Caco-2 (cell line): ENCODE measurements at regions of chr15 and their contacts with region 1.

Region 1: DNA sequence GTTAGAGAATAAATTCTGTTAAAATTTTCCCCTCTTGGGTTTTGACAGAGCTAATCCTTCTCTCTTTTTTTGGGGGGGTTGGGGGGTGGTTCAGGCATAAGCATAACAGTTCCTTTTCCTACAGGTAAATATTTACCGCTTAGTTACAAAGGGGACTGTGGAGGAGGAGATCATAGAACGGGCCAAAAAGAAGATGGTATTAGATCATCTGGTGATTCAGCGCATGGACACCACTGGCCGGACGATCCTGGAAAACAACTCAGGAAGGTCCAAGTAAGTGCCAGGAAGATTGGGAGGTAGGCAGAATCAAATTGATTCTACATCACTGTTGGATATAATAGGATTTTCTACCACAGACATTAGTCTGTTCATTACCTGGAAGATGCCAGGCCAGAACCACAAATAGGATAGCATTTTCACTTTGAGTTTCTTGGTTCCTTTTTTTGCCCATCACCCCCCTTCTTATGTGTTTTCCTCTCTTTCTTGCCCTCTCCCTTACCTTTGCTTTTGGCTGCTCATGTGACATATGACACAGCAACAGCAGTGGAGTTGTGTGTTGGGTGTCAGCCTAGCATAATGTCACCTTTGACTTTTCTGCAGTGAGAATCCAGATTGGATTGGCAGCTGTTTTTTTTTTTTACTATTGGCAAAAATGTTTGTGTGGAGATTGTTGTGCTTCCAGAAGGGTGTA is 79.0 kb downstream of the CHD2 start:
- DNase-seq: no peak
- H3K4me3 ChIP-seq: no peak overlapping the region
- H3K4me3 Mint-ChIP-seq: no peak overlapping the region
- H3K27ac Mint-ChIP-seq: no peak overlapping the region
- H3K4me1 ChIP-seq: no peaks in the 10 kb centered on the region
- H3K4me1 Mint-ChIP-seq: no peaks in the 10 kb centered on the region
- H3K27me3 ChIP-seq: no peaks in the 10 kb centered on the region
- H3K27me3 Mint-ChIP-seq: no peaks in the 10 kb centered on the region
- CTCF ChIP-seq: no peak

Region 2: GRCh38 chr15:92917606-92918407 is 61.3 kb before region 1 on chr15:
- CTCF ChIA-PET with region 1: no interaction called
- POLR2A ChIA-PET with region 1: no interaction called
- intact Hi-C with region 1: no loop called
- DNase-seq: peak; percentile 92
- H3K4me3 ChIP-seq: peak overlapping the region; percentile 10; the same call in 1 of the 2 replicates
- H3K4me3 Mint-ChIP-seq: peak overlapping the region; percentile 78
- H3K27ac Mint-ChIP-seq: peak overlapping the region; percentile 88
- H3K4me1 ChIP-seq: peaks cover 72% of the 10 kb centered on the region
- H3K4me1 Mint-ChIP-seq: peaks cover 46% of the 10 kb centered on the region
- H3K27me3 ChIP-seq: no peaks in the 10 kb centered on the region
- H3K27me3 Mint-ChIP-seq: no peaks in the 10 kb centered on the region
- CTCF ChIP-seq: peak; percentile 64 to 78

Region 3: GRCh38 chr15:92968926-92969651 is 10.1 kb before region 1 on chr15:
- CTCF ChIA-PET with region 1: no interaction called
- POLR2A ChIA-PET with region 1: no interaction called
- intact Hi-C with region 1: loop called (anchors 1 kb)
- DNase-seq: no peak
- H3K4me3 ChIP-seq: no peak overlapping the region
- H3K4me3 Mint-ChIP-seq: no peak overlapping the region
- H3K27ac Mint-ChIP-seq: no peak overlapping the region
- H3K4me1 ChIP-seq: no peaks in the 10 kb centered on the region
- H3K4me1 Mint-ChIP-seq: peaks cover 7% of the 10 kb centered on the region
- H3K27me3 ChIP-seq: no peaks in the 10 kb centered on the region
- H3K27me3 Mint-ChIP-seq: no peaks in the 10 kb centered on the region
- CTCF ChIP-seq: no peak

Region 4: DNA sequence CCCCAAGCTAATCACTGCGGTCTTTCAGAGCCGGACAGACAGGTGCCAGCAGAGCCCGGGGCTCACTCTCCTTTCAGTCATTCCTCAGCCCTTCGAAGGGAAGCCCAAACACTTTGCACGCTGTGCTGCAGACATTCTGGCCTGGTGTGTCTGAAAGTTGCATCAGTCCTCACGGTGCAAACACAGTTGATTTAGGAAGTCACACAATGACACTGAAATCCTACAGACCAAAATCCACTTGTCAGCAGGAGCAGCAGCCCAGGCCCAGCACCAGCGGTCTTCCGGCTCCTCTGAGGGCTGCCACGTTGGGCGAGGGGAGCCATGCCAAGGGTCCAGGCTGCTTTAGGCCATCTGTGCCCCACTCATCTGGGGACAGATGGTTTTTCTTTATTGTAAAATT is 48.3 kb after region 1 on chr15:
- CTCF ChIA-PET with region 1: no interaction called
- POLR2A ChIA-PET with region 1: no interaction called
- intact Hi-C with region 1: no loop called
- DNase-seq: no peak
- H3K4me3 ChIP-seq: no peak overlapping the region
- H3K4me3 Mint-ChIP-seq: no peak overlapping the region
- H3K27ac Mint-ChIP-seq: peak overlapping the region; percentile 51
- H3K4me1 ChIP-seq: no peaks in the 10 kb centered on the region
- H3K4me1 Mint-ChIP-seq: peaks cover 18% of the 10 kb centered on the region
- H3K27me3 ChIP-seq: no peaks in the 10 kb centered on the region
- H3K27me3 Mint-ChIP-seq: no peaks in the 10 kb centered on the region
- CTCF ChIP-seq: no peak

Region 5: GRCh38 chr15:93173369-93173768 is 194.2 kb after region 1 on chr15:
- CTCF ChIA-PET with region 1: no interaction called
- POLR2A ChIA-PET with region 1: no interaction called
- intact Hi-C with region 1: no loop called
- DNase-seq: no peak
- H3K4me3 ChIP-seq: no peak overlapping the region
- H3K4me3 Mint-ChIP-seq: no peak overlapping the region
- H3K27ac Mint-ChIP-seq: no peak overlapping the region
- H3K4me1 ChIP-seq: no peaks in the 10 kb centered on the region
- H3K4me1 Mint-ChIP-seq: no peaks in the 10 kb centered on the region
- H3K27me3 ChIP-seq: no peaks in the 10 kb centered on the region
- H3K27me3 Mint-ChIP-seq: peaks cover 6% of the 10 kb centered on the region
- CTCF ChIP-seq: no peak